Astrocyte of the cerebellum (primary cell): ENCODE measurements at regions of chr1 and their contacts with region 1.

Region 1: DNA sequence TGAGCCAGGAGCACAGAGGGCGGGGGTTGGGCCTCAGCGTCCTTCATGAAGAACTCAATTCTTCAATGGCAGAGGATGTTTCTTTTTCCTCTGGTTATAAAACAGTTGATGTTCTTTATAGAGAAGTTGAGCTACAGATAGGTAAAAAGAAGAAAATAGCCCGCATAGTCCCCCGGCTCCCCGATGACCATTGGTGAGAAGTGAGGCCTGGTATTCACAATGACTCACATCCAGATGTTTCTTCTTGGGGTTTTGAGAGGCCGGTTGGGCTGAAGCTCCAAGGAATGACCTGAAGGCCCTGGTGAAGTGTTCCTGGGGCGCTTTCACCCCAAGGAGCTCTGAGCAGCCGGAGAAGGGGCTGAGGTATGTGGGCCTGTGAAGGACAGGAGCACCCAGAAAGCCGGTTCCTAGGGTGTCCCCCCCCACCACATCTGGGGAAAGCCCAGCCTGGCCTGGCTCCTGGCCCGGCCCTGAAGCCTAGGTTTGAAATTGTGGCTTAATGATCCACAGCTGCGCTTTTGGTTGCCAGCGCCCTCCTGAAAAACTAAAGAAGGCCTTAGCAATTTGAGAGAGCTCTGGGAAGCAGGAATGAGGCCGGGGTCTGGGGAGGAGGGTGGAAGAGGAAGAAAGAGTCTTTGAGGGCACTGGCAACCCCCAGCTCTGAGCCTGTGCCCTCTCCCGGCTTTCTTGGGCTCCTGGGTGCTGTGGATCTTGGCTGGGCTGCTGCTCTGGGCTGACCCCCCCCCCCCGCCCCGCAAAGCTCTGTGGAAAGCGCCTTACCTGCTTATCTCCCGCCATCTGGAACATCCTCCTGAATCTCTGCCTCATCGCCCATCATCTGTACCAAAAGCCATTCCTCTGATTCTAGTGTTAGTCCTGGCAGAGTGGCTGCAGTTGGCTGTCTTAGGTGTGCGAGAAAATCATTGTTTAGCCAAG is 444.7 kb downstream of the CAMTA1 start:
- DNase-seq: no peak
- H3K4me3 ChIP-seq: no peak overlapping the region
- CTCF ChIP-seq: no peak

Region 2: DNA sequence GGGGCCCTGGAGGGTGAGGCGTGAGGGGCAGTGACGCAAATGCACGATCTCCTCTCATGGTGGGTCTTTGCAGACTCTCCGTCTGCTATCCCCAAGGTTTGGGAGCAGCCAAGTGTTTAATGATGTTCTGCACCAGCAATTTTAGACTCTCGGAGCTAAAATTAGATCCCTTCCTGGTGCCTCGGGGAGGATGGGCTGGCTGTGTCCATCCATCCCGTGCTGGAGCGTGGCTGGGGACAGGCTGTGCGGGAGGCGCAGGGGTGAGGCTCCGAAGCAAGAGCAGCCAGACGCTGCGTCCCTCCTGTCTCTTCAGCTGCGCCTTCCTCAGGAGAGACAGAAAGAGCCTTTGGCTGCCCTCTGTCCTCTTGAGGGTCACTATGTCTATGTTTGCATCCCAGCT is 57.2 kb before region 1 on chr1:
- in situ Hi-C with region 1: loop called (anchors 5 kb)
- DNase-seq: no peak
- H3K4me3 ChIP-seq: no peak overlapping the region
- CTCF ChIP-seq: no peak

Region 3: DNA sequence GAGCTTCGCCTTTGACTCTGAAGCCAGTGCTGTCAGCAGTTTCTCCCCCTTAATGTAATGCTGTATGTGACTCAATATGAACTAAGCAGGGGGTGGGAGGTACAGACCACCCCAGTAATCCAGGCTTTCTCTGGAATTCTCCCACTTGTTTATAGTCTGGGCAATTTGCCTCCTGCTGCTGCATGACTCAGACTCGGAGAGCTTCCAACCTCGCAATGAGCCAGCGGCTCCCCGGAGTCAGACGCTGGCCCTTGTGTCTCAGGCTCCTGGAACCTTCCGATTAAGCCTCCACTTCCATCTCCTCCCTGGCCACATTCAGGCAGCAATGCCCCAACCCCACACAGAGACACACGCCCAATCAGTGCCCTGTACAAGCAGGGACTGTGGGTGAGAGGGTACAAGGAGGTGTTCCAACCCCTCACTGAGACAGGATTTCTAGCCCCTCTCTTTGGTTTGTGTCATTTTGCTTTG is 69.4 kb after region 1 on chr1:
- in situ Hi-C with region 1: loop called (anchors 5 kb)
- DNase-seq: peak; percentile 96
- H3K4me3 ChIP-seq: no peak overlapping the region
- CTCF ChIP-seq: no peak

Region 4: GRCh38 chr1:7406641-7407543 is 176.9 kb after region 1 on chr1:
- in situ Hi-C with region 1: loop called (anchors 5 kb)
- DNase-seq: no peak
- H3K4me3 ChIP-seq: no peak overlapping the region
- CTCF ChIP-seq: no peak